Posterior cingulate gyrus (tissue), 11 donors: ENCODE measurements at regions of chr5 and their contacts with region 1.

Region 1: GRCh38 chr5:150700594-150701293 is at the start of gene RBM22:
- DNase-seq: peak; percentile 92 to 99 (median 93)

Region 2: DNA sequence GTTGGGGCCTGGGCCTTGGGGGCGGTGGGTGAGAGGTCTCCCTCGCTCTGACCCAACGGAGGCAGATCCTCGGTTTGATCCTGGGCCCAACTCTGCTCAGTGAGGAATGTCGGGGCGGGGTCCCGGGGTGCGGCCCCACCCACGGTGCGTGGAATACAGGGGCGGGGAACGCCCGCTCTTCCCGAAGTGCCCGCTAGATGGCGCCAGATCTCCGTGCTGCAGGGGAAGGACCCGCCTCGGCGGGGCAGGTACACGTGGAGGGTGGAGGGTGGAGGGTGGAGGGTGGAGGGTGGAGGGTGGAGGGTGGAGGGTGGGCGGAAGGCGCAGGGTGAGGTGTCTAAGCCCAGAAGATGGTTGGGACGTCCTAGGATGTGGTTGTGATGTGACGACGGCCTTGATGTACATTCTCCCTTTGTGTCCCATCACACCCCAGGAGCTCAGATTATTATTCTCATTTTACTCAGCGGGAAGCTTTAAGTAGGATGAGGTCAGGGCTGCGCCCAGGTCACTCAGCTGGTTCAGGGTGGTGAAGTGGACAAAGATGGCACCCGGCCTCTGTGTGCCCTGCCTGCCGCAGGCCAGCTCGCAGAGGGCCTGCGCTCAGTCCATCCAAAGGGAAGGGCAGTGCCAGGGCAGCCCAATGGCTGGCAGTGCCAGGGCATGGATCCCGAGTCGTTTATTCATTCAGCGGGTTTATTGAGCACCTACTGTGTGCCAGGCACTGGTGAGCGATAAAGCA is 241.8 kb before region 1 on chr5:
- intact Hi-C with region 1: loop called (anchors 5 kb)
- DNase-seq: peak; percentile 58 to 97 (median 82)

Region 3: GRCh38 chr5:150560401-150561193 is 140.1 kb before region 1 on chr5:
- intact Hi-C with region 1: loop called (anchors 5 kb)
- DNase-seq: peak in 8 of 10 donors; percentile 59 to 94 (median 88)

Region 4: GRCh38 chr5:150758531-150759333 is 58.0 kb after region 1 on chr5 and contains the start of gene DCTN4:
- intact Hi-C with region 1: loop called (anchors 2 kb)
- DNase-seq: peak; percentile 95 to 99 (median 96)

Region 5: GRCh38 chr5:151534350-151534749 is 833.6 kb after region 1 on chr5:
- intact Hi-C with region 1: no loop called
- DNase-seq: peak in 1 of 10 donors; percentile 33